ENCODE measurements at regions of chr7 and their contacts with region 1.

Region 1: DNA sequence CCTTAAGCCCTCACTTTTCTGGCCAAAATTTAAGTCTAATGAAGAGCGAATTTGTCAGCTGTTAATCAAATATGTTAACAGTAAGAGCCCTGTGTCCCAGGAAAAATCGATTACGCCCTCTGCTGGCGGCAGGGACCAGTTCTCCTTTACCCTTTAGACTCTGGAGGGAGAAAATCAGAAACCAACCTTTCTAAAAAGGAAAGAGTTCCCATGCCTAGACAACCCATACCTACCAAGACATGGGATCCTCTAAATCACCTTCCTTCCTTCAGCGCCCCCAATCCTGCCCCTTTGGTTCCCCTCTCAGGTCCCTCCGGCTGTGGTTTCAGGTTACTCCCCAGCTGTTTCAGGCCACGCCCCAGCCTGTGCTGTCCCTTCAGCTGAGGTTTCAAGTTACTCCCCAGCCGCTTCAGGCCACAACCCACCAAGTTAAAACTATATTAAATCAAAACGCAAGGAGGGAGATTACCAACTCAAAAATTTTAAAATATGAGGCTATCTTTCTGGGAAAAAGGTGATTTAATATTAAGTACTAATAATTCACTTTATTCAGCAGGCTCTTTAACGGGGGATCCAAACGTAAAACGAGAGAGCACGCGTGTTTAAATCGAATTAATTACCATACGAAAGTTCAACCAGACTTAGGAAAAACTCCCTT is 1.4 kb upstream of the AKR1B15 start:
- DNase-seq: peak; percentile 28 to 92 (median 75)

Region 2: GRCh38 chr7:134593530-134594392 is 46.2 kb after region 1 on chr7:
- intact Hi-C with region 1: loop called (anchors 5 kb)
- DNase-seq: peak in 9 of 10 donors; percentile 45 to 95 (median 79)

Region 3: GRCh38 chr7:134986363-134987251 is 439.1 kb after region 1 on chr7 and contains the start of gene AGBL3:
- intact Hi-C with region 1: no loop called
- DNase-seq: peak; percentile 80 to 99 (median 92)

Measured in posterior cingulate gyrus (tissue), 11 donors.